Activated CD4-positive, alpha-beta memory T cell treated with anti-CD3 and anti-CD28 coated beads, Interleukin-2, amount 10 ng/mL, durations not matched to agents 7 days and 5 days (primary cell): ENCODE measurements at regions of chr20 and their contacts with region 1.

Region 1: GRCh38 chr20:40741507-40742106 is 52.6 kb upstream of the MAFB start:
- DNase-seq: peak; percentile 60
- H3K4me3 Mint-ChIP-seq: no peak overlapping the region
- H3K27ac Mint-ChIP-seq: no peak overlapping the region
- H3K4me1 Mint-ChIP-seq: no peaks in the 10 kb centered on the region
- H3K27me3 Mint-ChIP-seq: peaks cover 1% of the 10 kb centered on the region

Region 2: GRCh38 chr20:40718982-40719729 is 22.5 kb before region 1 on chr20:
- CTCF ChIA-PET with region 1: interaction called, 11 read pairs
- POLR2A ChIA-PET with region 1: no interaction called
- DNase-seq: no peak
- H3K4me3 Mint-ChIP-seq: no peak overlapping the region
- H3K27ac Mint-ChIP-seq: no peak overlapping the region
- H3K4me1 Mint-ChIP-seq: no peaks in the 10 kb centered on the region
- H3K27me3 Mint-ChIP-seq: peaks cover 6% of the 10 kb centered on the region

Region 3: GRCh38 chr20:40754339-40754943 is 12.8 kb after region 1 on chr20:
- CTCF ChIA-PET with region 1: interaction called, 13 read pairs
- POLR2A ChIA-PET with region 1: no interaction called
- DNase-seq: no peak
- H3K4me3 Mint-ChIP-seq: no peak overlapping the region
- H3K27ac Mint-ChIP-seq: no peak overlapping the region
- H3K4me1 Mint-ChIP-seq: peaks cover 34% of the 10 kb centered on the region
- H3K27me3 Mint-ChIP-seq: peaks cover 2% of the 10 kb centered on the region